ENCODE measurements at regions of chr18 and their contacts with region 1.

Region 1: GRCh38 chr18:5439986-5440696 is 103.7 kb downstream of the EPB41L3 start:
- DNase-seq: no peak
- ATAC-seq: peak in 1 of 8 donors; percentile 43
- H3K4me3 ChIP-seq: no peak overlapping the region
- H3K27ac ChIP-seq: peak overlapping the region in 1 of 10 donors; percentile 78
- H3K4me1 ChIP-seq: peaks cover 0 to 18% (median 0%) of the 10 kb centered on the region in 9 donors
- H3K27me3 ChIP-seq: no peaks in the 10 kb centered on the region
- CTCF ChIP-seq: no peak

Region 2: GRCh38 chr18:5380586-5380985 is 59.6 kb before region 1 on chr18:
- intact Hi-C with region 1: loop called in 1 of 10 experiments (anchors 10 kb)
- DNase-seq: no peak
- ATAC-seq: no peak
- H3K4me3 ChIP-seq: no peak overlapping the region
- H3K27ac ChIP-seq: no peak overlapping the region
- H3K4me1 ChIP-seq: no peaks in the 10 kb centered on the region
- H3K27me3 ChIP-seq: no peaks in the 10 kb centered on the region
- CTCF ChIP-seq: no peak

Measured in heart right ventricle (tissue), 16 donors.